ENCODE measurements at regions of chr11 and their contacts with region 1.

Region 1: GRCh38 chr11:113305440-113306336 is 8.7 kb upstream of the TTC12 start:
- DNase-seq: peak; percentile 59
- ATAC-seq: peak; percentile 100
- H3K4me3 ChIP-seq: no peak overlapping the region
- H3K27ac ChIP-seq: peak overlapping the region; percentile 56; the same call in 1 of the 2 replicates
- H3K4me1 ChIP-seq: no peaks in the 10 kb centered on the region
- H3K27me3 ChIP-seq: no peaks in the 10 kb centered on the region
- CTCF ChIP-seq: peak; percentile 96

Region 2: DNA sequence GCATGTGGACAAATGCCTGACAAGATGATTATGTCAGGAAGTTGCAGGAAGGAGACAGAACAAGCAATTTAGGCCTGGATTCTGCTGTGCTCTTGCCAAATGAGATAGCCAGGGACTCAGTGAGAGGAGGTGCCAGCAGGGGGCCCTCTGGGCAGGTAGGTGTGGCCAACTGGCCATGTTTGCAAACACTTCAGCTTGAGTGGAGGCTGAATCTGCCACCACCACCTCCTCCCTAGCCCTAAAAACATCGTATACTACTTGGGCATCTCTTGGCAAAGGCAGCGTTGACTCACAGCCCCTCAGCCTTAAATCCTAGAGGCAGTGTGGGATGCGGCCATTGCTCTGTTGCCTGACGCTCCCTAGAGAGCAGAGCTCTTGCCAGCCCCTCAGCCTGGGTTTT is 950.0 kb before region 1 on chr11:
- CTCF ChIA-PET with region 1: no interaction called
- POLR2A ChIA-PET with region 1: no interaction called
- in situ Hi-C with region 1: no loop called
- intact Hi-C with region 1: no loop called
- DNase-seq: no peak
- ATAC-seq: 0 out of 2 replicates have a peak, but pooled peaks have one; percentile 18
- H3K4me3 ChIP-seq: no peak overlapping the region
- H3K27ac ChIP-seq: no peak overlapping the region
- H3K4me1 ChIP-seq: no peaks in the 10 kb centered on the region
- H3K27me3 ChIP-seq: no peaks in the 10 kb centered on the region
- CTCF ChIP-seq: no peak; the same call in 1 of the 2 replicates

Region 3: GRCh38 chr11:113494021-113494420 is 188.3 kb after region 1 on chr11:
- CTCF ChIA-PET with region 1: interaction called, 4 read pairs
- POLR2A ChIA-PET with region 1: no interaction called
- in situ Hi-C with region 1: no loop called
- intact Hi-C with region 1: loop called (anchors 10 kb)
- DNase-seq: no peak
- ATAC-seq: peak; percentile 71; the same call in 1 of the 2 replicates
- H3K4me3 ChIP-seq: no peak overlapping the region
- H3K27ac ChIP-seq: no peak overlapping the region
- H3K4me1 ChIP-seq: no peaks in the 10 kb centered on the region
- H3K27me3 ChIP-seq: no peaks in the 10 kb centered on the region
- CTCF ChIP-seq: peak; percentile 54

Region 4: DNA sequence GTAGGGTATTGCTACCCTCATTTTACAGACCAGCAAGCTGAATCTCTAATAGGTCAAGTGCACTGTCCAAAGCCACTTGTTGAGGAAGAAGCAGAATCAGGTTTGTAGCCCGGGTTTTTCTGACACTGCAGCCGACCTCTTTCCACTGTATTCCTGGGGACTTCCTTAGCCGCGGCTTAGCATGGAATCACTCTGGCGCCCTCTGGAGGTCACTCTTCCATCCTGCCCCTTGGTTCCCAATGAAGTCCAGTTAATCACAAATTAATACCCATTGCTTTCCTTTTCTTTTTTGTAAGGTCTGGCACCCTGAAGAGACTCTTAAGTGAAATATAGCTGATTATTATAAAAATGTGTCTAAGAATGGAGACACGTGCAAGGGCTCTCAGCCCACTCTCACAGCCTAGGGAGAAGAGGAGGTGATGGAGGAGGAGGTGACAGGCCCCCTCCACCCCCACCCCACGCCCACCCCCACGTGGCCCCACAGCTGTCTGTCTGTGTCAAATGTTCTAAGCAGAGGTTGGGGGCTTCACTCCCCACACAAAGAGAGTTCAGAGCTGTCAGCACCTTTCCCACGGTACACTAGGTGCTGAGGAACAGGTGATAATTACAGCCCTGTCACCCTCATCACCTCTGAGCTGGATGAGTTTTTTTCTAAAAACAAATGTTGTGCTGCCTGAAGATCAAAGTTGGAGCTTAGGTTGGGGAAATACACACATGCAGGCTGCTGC is 227.2 kb after region 1 on chr11:
- CTCF ChIA-PET with region 1: no interaction called
- POLR2A ChIA-PET with region 1: no interaction called
- in situ Hi-C with region 1: no loop called
- intact Hi-C with region 1: loop called (anchors 1 kb)
- DNase-seq: peak; percentile 41
- ATAC-seq: peak; percentile 89
- H3K4me3 ChIP-seq: no peak overlapping the region
- H3K27ac ChIP-seq: peak overlapping the region; percentile 26; the same call in 1 of the 2 replicates
- H3K4me1 ChIP-seq: no peaks in the 10 kb centered on the region
- H3K27me3 ChIP-seq: peaks cover 3% of the 10 kb centered on the region; the same call in 1 of the 2 replicates
- CTCF ChIP-seq: peak; percentile 96

Region 5: GRCh38 chr11:113681711-113682413 is 376.2 kb after region 1 on chr11:
- CTCF ChIA-PET with region 1: no interaction called
- POLR2A ChIA-PET with region 1: interaction called, 13 read pairs
- in situ Hi-C with region 1: no loop called
- intact Hi-C with region 1: no loop called
- DNase-seq: no peak
- ATAC-seq: no peak; the same call in 1 of the 2 replicates
- H3K4me3 ChIP-seq: no peak overlapping the region
- H3K27ac ChIP-seq: peak overlapping the region; percentile 21; the same call in 1 of the 2 replicates
- H3K4me1 ChIP-seq: peaks cover 8% of the 10 kb centered on the region; the same call in 1 of the 2 replicates
- H3K27me3 ChIP-seq: no peaks in the 10 kb centered on the region
- CTCF ChIP-seq: no peak

Region 6: DNA sequence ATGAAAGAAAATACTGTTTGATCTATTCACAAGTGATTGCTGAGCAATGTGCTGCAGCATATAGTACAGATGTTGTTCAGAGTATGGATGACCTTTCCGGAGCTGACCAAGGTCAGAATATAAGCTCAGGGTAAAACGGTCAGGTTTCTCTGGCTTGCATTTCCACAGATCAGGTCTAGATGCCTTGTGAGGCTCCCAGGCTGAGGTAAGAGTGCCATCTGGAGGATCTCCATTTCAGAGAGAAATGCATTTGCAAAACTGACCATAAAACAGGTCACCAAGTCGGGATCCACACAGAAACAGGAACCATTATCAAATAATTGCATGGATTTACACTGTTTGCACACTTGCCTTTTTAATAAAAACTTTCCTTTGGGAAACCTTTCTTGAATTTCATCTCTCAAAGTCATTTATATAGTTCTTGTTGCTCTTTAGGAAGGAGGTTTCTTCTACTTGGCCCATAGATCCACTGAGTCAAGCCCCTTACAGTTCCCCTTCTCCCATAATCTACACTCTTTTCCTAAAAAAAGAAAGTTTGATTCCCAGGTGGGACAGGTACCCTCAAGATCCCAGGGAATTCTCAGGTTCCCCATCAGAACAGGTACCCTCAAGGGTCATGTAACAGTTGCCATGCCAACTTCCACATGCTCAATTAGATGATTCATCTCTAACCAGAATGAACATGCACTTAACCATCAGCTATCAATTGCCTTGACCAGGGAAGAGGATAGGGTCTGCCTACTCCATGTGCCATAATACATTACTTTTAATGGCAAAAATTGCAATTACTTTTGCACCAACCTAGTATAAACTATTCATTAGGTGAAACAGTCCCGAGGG is 425.4 kb after region 1 on chr11:
- CTCF ChIA-PET with region 1: interaction called, 3 read pairs
- POLR2A ChIA-PET with region 1: no interaction called
- in situ Hi-C with region 1: no loop called
- intact Hi-C with region 1: loop called (anchors 1 kb)
- DNase-seq: peak; percentile 20
- ATAC-seq: peak; percentile 91
- H3K4me3 ChIP-seq: no peak overlapping the region
- H3K27ac ChIP-seq: peak overlapping the region; percentile 65; the same call in 1 of the 2 replicates
- H3K4me1 ChIP-seq: peaks cover 6% of the 10 kb centered on the region; the same call in 1 of the 2 replicates
- H3K27me3 ChIP-seq: no peaks in the 10 kb centered on the region
- CTCF ChIP-seq: peak; percentile 81

Region 7: GRCh38 chr11:113806406-113806805 is 500.7 kb after region 1 on chr11:
- CTCF ChIA-PET with region 1: no interaction called
- POLR2A ChIA-PET with region 1: no interaction called
- in situ Hi-C with region 1: no loop called
- intact Hi-C with region 1: loop called (anchors 5 kb)
- DNase-seq: no peak
- ATAC-seq: peak; percentile 95
- H3K4me3 ChIP-seq: no peak overlapping the region
- H3K27ac ChIP-seq: no peak overlapping the region
- H3K4me1 ChIP-seq: no peaks in the 10 kb centered on the region
- H3K27me3 ChIP-seq: no peaks in the 10 kb centered on the region
- CTCF ChIP-seq: peak; percentile 78

Measured in Panc1 (cell line).